ENCODE measurements at regions of chrX and their contacts with region 1.

Region 1: DNA sequence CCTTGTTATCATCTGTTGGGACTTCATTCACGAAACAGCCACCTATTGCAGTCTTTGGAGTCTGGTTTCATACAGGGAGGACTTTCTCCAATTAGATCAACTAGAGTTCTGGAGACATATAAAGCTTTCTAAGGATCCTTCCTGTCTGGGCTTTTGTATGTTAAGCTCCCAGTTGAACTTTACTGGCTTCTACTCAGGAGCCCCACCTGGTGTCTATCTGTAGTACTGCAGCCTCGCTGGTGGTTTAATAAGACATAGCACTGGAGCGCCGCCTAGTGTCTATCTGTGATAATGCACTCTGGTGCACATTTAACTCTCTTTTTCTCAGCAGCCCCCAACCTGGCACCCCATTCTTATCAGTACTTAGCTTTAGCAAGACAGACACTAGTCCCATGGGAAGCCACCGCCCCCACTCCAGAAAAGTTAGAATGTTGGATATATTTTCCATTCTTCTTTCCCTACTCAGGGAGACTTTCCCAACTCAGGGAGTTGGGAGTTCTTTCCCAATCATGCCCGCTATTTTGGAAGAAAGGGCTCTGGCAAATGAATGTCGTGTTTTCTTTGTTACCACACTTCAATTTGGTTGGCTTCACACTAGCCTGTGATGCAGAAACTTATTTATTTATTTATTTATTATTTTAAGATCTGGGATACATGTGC is 36.9 kb upstream of the SYTL4 start:
- DNase-seq: peak; percentile 64
- H3K4me3 ChIP-seq: peak overlapping the region in 1 of 2 experiments; percentile 23; a peak in 1 of 4 replicates
- H3K27ac ChIP-seq: no peak overlapping the region
- H3K4me1 ChIP-seq: no peaks in the 10 kb centered on the region
- H3K27me3 ChIP-seq: no peaks in the 10 kb centered on the region
- CTCF ChIP-seq: peak; percentile 100
- EP300 ChIP-seq: no peak
- RAD21 ChIP-seq: peak; percentile 97

Region 2: DNA sequence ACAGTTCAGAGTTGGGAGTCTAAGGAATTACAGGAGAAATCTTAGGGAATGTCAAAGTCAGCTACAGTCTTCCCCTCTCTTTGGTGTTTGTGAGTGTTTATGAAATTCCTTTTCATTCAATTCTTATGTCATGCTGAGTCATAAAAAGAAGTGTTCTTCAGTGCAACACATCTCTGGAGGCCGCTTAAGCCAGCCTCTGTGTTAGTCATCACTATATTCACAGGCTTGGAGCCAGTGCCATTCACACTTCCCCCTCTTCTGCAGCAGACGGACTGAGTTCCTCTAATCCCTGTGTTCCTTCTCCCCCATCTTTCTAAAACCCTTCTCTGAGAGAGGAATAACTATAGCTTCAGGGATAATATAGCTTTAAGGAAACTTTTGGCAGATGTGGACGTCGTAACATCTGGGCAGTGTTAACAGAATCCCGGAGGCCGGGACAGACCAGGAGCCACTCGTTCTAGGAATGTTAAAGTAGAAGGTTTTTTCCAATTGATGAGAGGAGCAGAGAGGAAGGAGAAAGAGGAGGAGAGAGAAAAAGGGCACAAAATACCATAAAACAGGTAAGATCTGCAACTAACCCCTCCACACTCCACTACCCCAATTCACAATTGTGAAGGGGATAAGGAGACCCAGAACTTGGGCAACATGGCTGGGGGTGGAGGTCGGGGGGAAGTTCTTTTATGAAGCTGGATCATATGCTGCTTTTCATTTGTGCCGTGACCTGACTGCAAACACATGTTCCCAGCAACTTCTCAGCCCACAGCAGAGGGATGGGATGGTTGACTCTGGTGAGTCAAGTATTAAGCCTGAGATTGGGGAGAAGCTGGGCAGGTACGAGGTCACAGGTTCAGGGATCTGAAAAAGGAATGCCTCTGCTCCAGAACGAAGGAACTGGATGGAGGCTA is 124.6 kb before region 1 on chrX and contains the start of gene SRPX2:
- CTCF ChIA-PET with region 1: interaction called, 10 read pairs
- POLR2A ChIA-PET with region 1: no interaction called
- DNase-seq: no peak
- H3K4me3 ChIP-seq: peak within 1 kb of the TSS in 1 of 2 experiments; percentile 45; a peak in 1 of 4 replicates
- H3K27ac ChIP-seq: peak within 1 kb of the TSS in 1 of 2 experiments; percentile 70; a peak in 2 of 4 replicates
- H3K4me1 ChIP-seq: peaks cover 0 to 14% of the 10 kb centered on the region in 2 experiments; a peak in 1 of 4 replicates
- H3K27me3 ChIP-seq: 0 out of 2 replicates have a peak, but pooled peaks cover 4% of the 10 kb centered on the region
- CTCF ChIP-seq: no peak
- EP300 ChIP-seq: no peak
- RAD21 ChIP-seq: no peak
- polyA plus RNA-seq, gene SRPX2: 14.5 and 18.7 TPM in 2 replicates

Region 3: GRCh38 chrX:100662796-100663195 is 106.0 kb before region 1 on chrX:
- CTCF ChIA-PET with region 1: interaction called, 22 read pairs
- POLR2A ChIA-PET with region 1: no interaction called
- DNase-seq: no peak
- H3K4me3 ChIP-seq: no peak overlapping the region
- H3K27ac ChIP-seq: no peak overlapping the region
- H3K4me1 ChIP-seq: no peaks in the 10 kb centered on the region
- H3K27me3 ChIP-seq: no peaks in the 10 kb centered on the region; the same call in 1 of the 2 replicates
- CTCF ChIP-seq: no peak
- EP300 ChIP-seq: no peak
- RAD21 ChIP-seq: no peak

Region 4: DNA sequence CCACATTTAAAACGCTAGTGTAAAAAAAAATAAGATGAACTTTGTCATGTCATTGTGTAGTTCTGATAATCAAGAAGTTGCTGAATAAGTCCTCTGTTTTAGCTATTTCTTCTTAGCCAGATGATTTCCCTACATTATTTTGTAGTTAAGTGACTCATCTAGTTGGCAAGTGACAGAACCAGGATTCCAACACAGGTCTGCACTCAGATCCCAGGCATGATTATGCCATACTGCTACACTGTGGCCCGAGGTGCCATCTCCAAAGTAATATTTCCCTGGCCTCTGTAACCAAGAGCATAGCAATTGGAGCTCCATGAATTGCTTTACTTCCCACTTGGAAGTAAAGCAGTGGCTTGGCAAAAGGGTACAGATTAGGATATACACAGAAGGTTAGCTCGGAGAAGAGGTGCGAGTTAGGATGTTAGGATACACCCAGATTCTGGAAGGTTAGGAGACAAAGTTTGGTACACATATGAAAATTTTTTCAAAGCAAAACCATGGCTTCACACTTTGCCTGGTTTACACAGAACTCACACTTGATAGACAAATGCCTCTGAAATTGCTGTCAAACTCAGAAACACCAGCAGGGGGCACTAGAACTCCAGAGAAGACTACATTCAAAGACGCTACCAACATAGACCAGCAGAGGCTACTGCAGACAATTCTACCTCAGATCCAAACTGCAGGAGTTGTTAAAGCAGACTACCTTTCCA is 83.4 kb before region 1 on chrX:
- CTCF ChIA-PET with region 1: interaction called, 211 read pairs
- POLR2A ChIA-PET with region 1: no interaction called
- DNase-seq: peak; percentile 65
- H3K4me3 ChIP-seq: no peak overlapping the region; a peak in 1 of 4 replicates
- H3K27ac ChIP-seq: 0 out of 4 replicates have a peak overlapping the region, but pooled peaks of 1 of the 2 experiments have one; percentile 14
- H3K4me1 ChIP-seq: no peaks in the 10 kb centered on the region
- H3K27me3 ChIP-seq: peaks cover 3% of the 10 kb centered on the region; the same call in 1 of the 2 replicates
- CTCF ChIP-seq: peak; percentile 91
- EP300 ChIP-seq: no peak
- RAD21 ChIP-seq: peak; percentile 95

Region 5: DNA sequence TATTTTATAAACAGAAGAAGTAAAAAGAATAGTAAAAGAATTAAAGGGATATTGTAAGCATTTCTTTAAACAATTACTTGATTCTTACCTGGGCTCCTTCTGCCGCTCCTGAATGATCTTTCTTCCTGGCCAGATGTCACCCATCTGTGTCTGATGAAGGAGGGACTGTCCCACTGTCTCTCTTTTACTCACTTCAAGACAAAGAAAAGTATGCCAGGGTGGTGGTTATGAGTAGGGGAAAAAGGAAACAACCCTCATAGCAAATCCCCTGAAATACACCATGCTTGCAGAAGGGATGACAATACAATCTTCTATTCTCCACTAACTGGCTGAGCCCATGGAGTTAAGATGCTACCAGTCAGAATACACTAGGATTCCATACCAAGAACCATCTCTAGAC is 68.0 kb before region 1 on chrX:
- CTCF ChIA-PET with region 1: interaction called, 18 read pairs
- POLR2A ChIA-PET with region 1: no interaction called
- DNase-seq: no peak
- H3K4me3 ChIP-seq: no peak overlapping the region
- H3K27ac ChIP-seq: no peak overlapping the region
- H3K4me1 ChIP-seq: no peaks in the 10 kb centered on the region
- H3K27me3 ChIP-seq: no peaks in the 10 kb centered on the region
- CTCF ChIP-seq: no peak
- EP300 ChIP-seq: no peak
- RAD21 ChIP-seq: no peak

Region 6: GRCh38 chrX:100731441-100732281 is 37.1 kb before region 1 on chrX and contains the start of gene SYTL4:
- CTCF ChIA-PET with region 1: interaction called, 29 read pairs
- POLR2A ChIA-PET with region 1: no interaction called
- DNase-seq: peak; percentile 60
- H3K4me3 ChIP-seq: peak within 1 kb of the TSS; percentile 62 to 67
- H3K27ac ChIP-seq: no peak within 1 kb of the TSS
- H3K4me1 ChIP-seq: peaks cover 0 to 3% of the 10 kb centered on the region in 2 experiments; a peak in 1 of 4 replicates
- H3K27me3 ChIP-seq: peaks cover 4% of the 10 kb centered on the region; the same call in 1 of the 2 replicates
- CTCF ChIP-seq: no peak
- EP300 ChIP-seq: no peak
- RAD21 ChIP-seq: no peak
- polyA plus RNA-seq, gene SYTL4: 2.3 and 3.1 TPM in 2 replicates

Region 7: DNA sequence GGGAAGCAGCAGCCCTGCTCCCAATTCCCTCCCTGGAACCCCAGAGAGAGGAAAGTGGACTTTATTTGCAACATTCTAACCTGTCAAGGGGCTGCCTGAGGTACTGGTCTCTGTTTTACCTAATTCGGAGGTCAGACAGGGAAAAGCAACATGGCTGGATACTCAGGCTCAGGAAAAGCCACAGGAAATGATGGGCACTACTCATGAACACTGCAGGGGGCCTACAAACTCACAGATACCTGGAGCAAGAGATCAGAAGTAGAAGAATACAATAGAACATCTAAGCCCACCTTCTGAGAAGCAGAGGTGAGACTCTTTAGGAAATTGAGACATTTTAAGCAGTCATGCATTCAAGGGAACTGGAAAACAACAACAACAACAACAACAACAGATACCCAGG is 36.0 kb after region 1 on chrX:
- CTCF ChIA-PET with region 1: no interaction called
- POLR2A ChIA-PET with region 1: no interaction called
- DNase-seq: no peak
- H3K4me3 ChIP-seq: no peak overlapping the region
- H3K27ac ChIP-seq: no peak overlapping the region
- H3K4me1 ChIP-seq: no peaks in the 10 kb centered on the region
- H3K27me3 ChIP-seq: 0 out of 2 replicates have a peak, but pooled peaks cover 6% of the 10 kb centered on the region
- CTCF ChIP-seq: no peak
- EP300 ChIP-seq: no peak
- RAD21 ChIP-seq: no peak

Region 8: GRCh38 chrX:101450961-101451360 is 682.2 kb after region 1 on chrX:
- CTCF ChIA-PET with region 1: no interaction called
- POLR2A ChIA-PET with region 1: no interaction called
- DNase-seq: no peak
- H3K4me3 ChIP-seq: no peak overlapping the region
- H3K27ac ChIP-seq: no peak overlapping the region
- H3K4me1 ChIP-seq: no peaks in the 10 kb centered on the region
- H3K27me3 ChIP-seq: no peaks in the 10 kb centered on the region
- CTCF ChIP-seq: no peak
- EP300 ChIP-seq: no peak
- RAD21 ChIP-seq: no peak